Natural killer cell (primary cell): ENCODE measurements at regions of chr14 and their contacts with region 1.

Region 1: GRCh38 chr14:68816262-68816942 is 23.5 kb upstream of the ZFP36L1 start:
- DNase-seq: peak; percentile 92 to 94
- ATAC-seq: peak; percentile 77 to 90 (median 80)
- H3K4me3 ChIP-seq: peak overlapping the region; percentile 32
- H3K4me3 Mint-ChIP-seq: peak overlapping the region; percentile 80
- H3K27ac ChIP-seq: peak overlapping the region; percentile 98
- H3K27ac Mint-ChIP-seq: peak overlapping the region; percentile 91 to 97
- H3K4me1 ChIP-seq: peaks cover 77% of the 10 kb centered on the region
- H3K4me1 Mint-ChIP-seq: peaks cover 63 to 69% of the 10 kb centered on the region in 2 donors
- H3K27me3 ChIP-seq: no peaks in the 10 kb centered on the region
- H3K27me3 Mint-ChIP-seq: no peaks in the 10 kb centered on the region
- CTCF ChIP-seq: peak; percentile 91

Region 2: GRCh38 chr14:67467179-67468080 is 1349.0 kb before region 1 on chr14:
- intact Hi-C with region 1: no loop called
- DNase-seq: peak; percentile 26 to 34
- ATAC-seq: peak; percentile 72 to 95 (median 90)
- H3K4me3 ChIP-seq: no peak overlapping the region
- H3K4me3 Mint-ChIP-seq: peak overlapping the region; percentile 77
- H3K27ac ChIP-seq: no peak overlapping the region
- H3K27ac Mint-ChIP-seq: peak overlapping the region; percentile 23 to 50
- H3K4me1 ChIP-seq: peaks cover 32% of the 10 kb centered on the region
- H3K4me1 Mint-ChIP-seq: peaks cover 25 to 63% of the 10 kb centered on the region in 2 donors
- H3K27me3 ChIP-seq: no peaks in the 10 kb centered on the region
- H3K27me3 Mint-ChIP-seq: peaks cover 0 to 14% of the 10 kb centered on the region in 2 donors
- CTCF ChIP-seq: no peak

Region 3: GRCh38 chr14:67837011-67837624 is 979.3 kb before region 1 on chr14:
- intact Hi-C with region 1: loop called (anchors 1 kb)
- DNase-seq: peak; percentile 39 to 84
- ATAC-seq: peak; percentile 78 to 83 (median 78)
- H3K4me3 ChIP-seq: no peak overlapping the region
- H3K4me3 Mint-ChIP-seq: no peak overlapping the region
- H3K27ac ChIP-seq: no peak overlapping the region
- H3K27ac Mint-ChIP-seq: peak overlapping the region in 1 of 2 donors; percentile 45
- H3K4me1 ChIP-seq: peaks cover 3% of the 10 kb centered on the region
- H3K4me1 Mint-ChIP-seq: no peaks in the 10 kb centered on the region
- H3K27me3 ChIP-seq: no peaks in the 10 kb centered on the region
- H3K27me3 Mint-ChIP-seq: no peaks in the 10 kb centered on the region
- CTCF ChIP-seq: peak; percentile 68

Region 4: GRCh38 chr14:67943947-67944346 is 872.5 kb before region 1 on chr14:
- intact Hi-C with region 1: loop called (anchors 2 kb)
- DNase-seq: peak in 1 of 2 donors; percentile 80
- ATAC-seq: peak; percentile 70 to 79 (median 78)
- H3K4me3 ChIP-seq: no peak overlapping the region
- H3K4me3 Mint-ChIP-seq: no peak overlapping the region
- H3K27ac ChIP-seq: no peak overlapping the region
- H3K27ac Mint-ChIP-seq: no peak overlapping the region
- H3K4me1 ChIP-seq: no peaks in the 10 kb centered on the region
- H3K4me1 Mint-ChIP-seq: no peaks in the 10 kb centered on the region
- H3K27me3 ChIP-seq: no peaks in the 10 kb centered on the region
- H3K27me3 Mint-ChIP-seq: no peaks in the 10 kb centered on the region
- CTCF ChIP-seq: peak; percentile 78

Region 5: DNA sequence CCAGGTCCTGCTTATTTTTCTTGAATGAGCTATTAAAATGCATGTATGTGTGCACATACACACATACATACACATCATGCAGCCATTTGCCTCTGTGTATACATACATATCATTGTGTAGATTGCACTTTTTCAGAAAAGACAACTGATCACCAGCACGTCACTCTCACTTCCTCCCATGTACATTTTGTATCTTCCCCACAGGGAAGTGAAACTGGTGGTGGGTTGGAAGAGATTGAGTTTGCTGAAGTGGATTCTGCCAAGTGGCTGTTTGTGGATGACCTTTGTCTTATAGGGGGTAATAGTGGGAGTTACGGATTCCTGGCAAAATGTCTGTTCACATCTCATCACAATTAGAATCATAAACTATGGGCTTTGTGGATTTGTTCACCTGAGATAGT is 548.2 kb before region 1 on chr14:
- intact Hi-C with region 1: loop called (anchors 5 kb)
- DNase-seq: peak in 1 of 2 donors; percentile 51
- ATAC-seq: peak; percentile 16 to 41 (median 25)
- H3K4me3 ChIP-seq: no peak overlapping the region
- H3K4me3 Mint-ChIP-seq: peak overlapping the region; percentile 80
- H3K27ac ChIP-seq: peak overlapping the region; percentile 76
- H3K27ac Mint-ChIP-seq: peak overlapping the region; percentile 92 to 93
- H3K4me1 ChIP-seq: peaks cover 26% of the 10 kb centered on the region
- H3K4me1 Mint-ChIP-seq: peaks cover 48 to 52% of the 10 kb centered on the region in 2 donors
- H3K27me3 ChIP-seq: no peaks in the 10 kb centered on the region
- H3K27me3 Mint-ChIP-seq: no peaks in the 10 kb centered on the region
- CTCF ChIP-seq: no peak

Region 6: DNA sequence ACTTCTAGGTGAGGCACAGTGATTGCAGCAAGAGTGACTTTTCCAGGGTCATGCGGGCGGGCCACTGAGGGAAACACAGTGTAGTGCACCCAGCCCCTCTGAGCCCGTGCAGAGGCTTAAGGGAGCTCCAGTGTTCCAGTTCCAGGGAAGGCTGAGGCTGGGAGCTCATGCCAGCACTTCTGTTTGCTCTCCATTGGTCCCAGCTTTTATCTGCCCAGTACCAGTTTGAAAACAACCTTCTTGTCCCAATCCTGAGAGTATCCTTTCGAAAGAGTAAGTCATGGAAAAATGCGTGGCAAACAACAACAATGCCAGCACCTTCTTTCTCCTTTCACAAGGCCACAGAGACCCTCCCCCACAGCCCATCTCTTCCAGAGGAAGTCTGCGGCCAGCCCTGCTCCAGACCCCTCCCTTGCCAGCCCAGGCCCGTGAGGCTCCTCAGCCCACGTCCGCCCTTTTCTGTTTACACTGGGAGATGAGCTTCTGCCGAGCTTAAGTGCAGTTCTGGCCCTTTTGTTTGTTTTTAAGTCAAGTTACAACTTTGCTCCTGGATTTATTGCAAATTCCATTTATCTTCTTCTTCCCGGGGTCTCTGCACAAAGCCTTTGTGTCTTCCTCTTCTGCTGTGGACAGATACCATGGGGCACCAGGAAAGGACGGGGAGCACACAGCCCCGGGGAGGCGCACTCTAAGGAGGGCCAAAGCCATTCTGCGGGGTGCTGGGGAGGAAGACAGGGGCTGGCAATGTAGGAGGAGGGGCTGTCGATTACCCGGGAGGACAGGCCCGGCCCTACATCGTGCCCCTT is 209.1 kb before region 1 on chr14:
- intact Hi-C with region 1: no loop called
- DNase-seq: no peak
- ATAC-seq: peak in 2 of 3 donors; percentile 24 to 59
- H3K4me3 ChIP-seq: no peak overlapping the region
- H3K4me3 Mint-ChIP-seq: peak overlapping the region; percentile 75
- H3K27ac ChIP-seq: peak overlapping the region; percentile 46
- H3K27ac Mint-ChIP-seq: peak overlapping the region; percentile 81
- H3K4me1 ChIP-seq: peaks cover 28% of the 10 kb centered on the region
- H3K4me1 Mint-ChIP-seq: peaks cover 16 to 18% of the 10 kb centered on the region in 2 donors
- H3K27me3 ChIP-seq: no peaks in the 10 kb centered on the region
- H3K27me3 Mint-ChIP-seq: no peaks in the 10 kb centered on the region
- CTCF ChIP-seq: no peak

Region 7: GRCh38 chr14:68762953-68763764 is 53.2 kb before region 1 on chr14:
- intact Hi-C with region 1: no loop called
- DNase-seq: no peak
- ATAC-seq: no peak
- H3K4me3 ChIP-seq: no peak overlapping the region
- H3K4me3 Mint-ChIP-seq: no peak overlapping the region
- H3K27ac ChIP-seq: no peak overlapping the region
- H3K27ac Mint-ChIP-seq: no peak overlapping the region
- H3K4me1 ChIP-seq: peaks cover 2% of the 10 kb centered on the region
- H3K4me1 Mint-ChIP-seq: peaks cover under 1 to 19% of the 10 kb centered on the region in 2 donors
- H3K27me3 ChIP-seq: no peaks in the 10 kb centered on the region
- H3K27me3 Mint-ChIP-seq: no peaks in the 10 kb centered on the region
- CTCF ChIP-seq: no peak

Region 8: DNA sequence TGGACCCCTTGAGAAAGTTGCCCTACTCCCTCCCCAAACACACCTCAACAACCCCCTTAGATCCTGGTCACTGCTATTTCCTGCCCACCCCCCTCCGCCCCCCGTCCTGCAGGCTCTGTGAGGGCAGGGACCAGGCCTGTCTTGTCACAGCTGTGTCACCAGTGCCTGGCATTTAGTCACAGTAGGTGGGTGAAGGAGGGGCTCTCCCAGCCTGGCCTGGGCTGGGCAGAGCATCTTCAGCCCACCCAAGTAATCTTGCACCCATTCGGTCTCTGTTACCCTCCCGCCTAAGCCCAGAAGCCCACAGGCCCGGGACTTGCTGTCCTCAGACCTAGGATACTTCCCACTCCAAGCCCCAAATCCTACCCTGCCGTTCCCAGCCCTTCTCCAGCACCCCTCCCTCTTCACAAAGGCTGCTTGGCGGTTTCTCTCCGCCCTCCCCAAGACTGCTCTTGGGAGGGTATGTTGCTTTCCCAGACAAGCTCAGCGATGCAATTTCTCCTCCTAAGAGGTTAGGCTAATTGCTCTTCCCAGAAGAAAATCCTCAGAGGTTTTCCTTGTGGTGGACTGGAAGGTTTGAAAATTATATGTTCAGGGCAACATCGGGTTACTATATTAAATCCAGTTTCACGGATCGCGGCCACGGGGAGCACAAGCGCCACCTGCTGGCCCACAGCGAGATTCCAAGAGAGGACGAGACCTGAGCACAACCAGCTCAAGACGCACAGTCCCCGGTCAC is 27.2 kb after region 1 on chr14:
- intact Hi-C with region 1: loop called (anchors 2 kb)
- DNase-seq: peak; percentile 75 to 86
- ATAC-seq: peak; percentile 64 to 73 (median 71)
- H3K4me3 ChIP-seq: no peak overlapping the region
- H3K4me3 Mint-ChIP-seq: peak overlapping the region; percentile 71
- H3K27ac ChIP-seq: no peak overlapping the region
- H3K27ac Mint-ChIP-seq: peak overlapping the region; percentile 31 to 86
- H3K4me1 ChIP-seq: peaks cover 32% of the 10 kb centered on the region
- H3K4me1 Mint-ChIP-seq: peaks cover 48 to 50% of the 10 kb centered on the region in 2 donors
- H3K27me3 ChIP-seq: no peaks in the 10 kb centered on the region
- H3K27me3 Mint-ChIP-seq: peaks cover 0 to 7% of the 10 kb centered on the region in 2 donors
- CTCF ChIP-seq: peak; percentile 93

Region 9: DNA sequence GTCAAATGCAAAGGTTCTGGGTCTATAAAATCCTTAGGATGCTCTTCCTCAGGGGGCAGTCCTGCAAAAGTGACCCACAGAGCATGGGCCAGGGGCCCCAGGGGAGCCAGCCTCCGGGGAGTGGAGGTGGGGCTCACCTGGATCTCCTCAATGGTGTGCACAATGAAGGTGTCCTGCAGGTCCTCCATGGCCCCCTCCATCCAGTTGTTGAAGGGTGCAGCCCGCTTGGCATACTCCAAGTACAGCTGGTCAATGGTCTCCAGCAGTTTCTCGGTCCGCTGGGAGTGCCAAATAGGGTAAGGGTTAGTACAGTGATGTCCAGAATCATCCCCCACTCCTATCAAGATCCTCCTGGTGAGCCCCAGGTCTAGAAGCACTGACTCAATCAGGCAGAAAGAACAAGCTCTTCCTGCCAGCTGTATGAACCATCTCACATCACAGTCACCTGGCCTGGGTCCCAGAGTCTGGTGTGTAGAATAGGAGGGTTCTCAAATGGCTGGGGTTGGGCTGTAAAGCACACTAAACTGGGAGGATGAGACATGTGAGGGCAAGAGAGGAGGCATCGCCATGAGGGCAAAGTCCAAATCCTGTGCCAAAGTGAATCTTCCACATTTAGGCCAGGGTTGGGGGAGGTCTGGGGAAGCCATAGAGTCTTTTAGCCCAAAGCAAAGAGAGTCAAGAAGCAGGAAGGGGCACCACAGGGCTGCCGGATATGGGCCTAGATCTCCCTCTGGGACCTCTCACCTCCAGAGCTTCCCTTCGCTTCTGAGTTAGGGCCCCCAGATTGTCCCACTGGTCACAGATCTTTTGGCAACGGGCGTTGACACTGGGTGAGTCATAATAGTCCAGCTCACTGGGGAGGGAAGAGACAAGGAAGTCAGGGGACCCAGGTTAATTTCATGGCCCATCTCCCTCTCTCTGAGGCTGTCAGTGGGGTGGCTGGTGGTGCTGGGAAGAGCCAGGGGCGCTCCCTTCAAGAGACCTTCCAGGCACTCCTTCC is 67.9 kb after region 1 on chr14:
- intact Hi-C with region 1: no loop called
- DNase-seq: no peak
- ATAC-seq: no peak
- H3K4me3 ChIP-seq: no peak overlapping the region
- H3K4me3 Mint-ChIP-seq: no peak overlapping the region
- H3K27ac ChIP-seq: no peak overlapping the region
- H3K27ac Mint-ChIP-seq: no peak overlapping the region
- H3K4me1 ChIP-seq: no peaks in the 10 kb centered on the region
- H3K4me1 Mint-ChIP-seq: no peaks in the 10 kb centered on the region
- H3K27me3 ChIP-seq: no peaks in the 10 kb centered on the region
- H3K27me3 Mint-ChIP-seq: no peaks in the 10 kb centered on the region
- CTCF ChIP-seq: no peak